Panc1 (cell line): ENCODE measurements at regions of chr14 and their contacts with region 1.

Region 1: DNA sequence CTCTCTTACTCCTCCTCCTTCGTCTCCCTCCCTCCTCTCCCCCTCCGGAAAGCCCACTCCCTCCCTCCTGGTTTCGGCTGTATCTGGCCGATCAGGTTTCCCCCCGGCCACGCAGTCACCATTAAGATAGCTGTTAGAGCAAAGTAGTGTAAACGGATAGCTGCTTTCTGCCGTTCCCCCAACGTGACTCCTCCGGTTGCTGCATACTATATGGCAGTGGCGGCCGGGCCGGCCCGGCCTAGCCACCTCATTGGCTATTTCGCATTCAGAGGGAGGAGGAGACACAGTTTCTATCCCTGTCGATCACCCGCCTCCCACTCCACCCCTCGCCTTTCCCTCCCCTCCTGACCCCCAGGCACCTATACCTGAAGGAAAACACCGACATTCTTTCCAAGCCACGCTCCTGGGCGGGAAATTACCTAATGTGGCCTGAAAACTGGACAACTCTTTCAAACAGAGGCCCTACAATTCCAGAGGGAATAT is at the start of gene SIX4:
- DNase-seq: peak; percentile 35
- ATAC-seq: peak; percentile 91
- H3K4me3 ChIP-seq: peak within 1 kb of the TSS; percentile 79 to 80
- H3K27ac ChIP-seq: peak within 1 kb of the TSS; percentile 89
- H3K4me1 ChIP-seq: peaks cover 11% of the 10 kb centered on the region
- H3K27me3 ChIP-seq: no peaks in the 10 kb centered on the region
- CTCF ChIP-seq: no peak
- total RNA-seq, gene SIX4: 17.3 TPM

Region 2: GRCh38 chr14:60420050-60420449 is 304.1 kb before region 1 on chr14:
- CTCF ChIA-PET with region 1: no interaction called
- POLR2A ChIA-PET with region 1: no interaction called
- in situ Hi-C with region 1: no loop called
- intact Hi-C with region 1: no loop called
- DNase-seq: no peak
- ATAC-seq: no peak
- H3K4me3 ChIP-seq: no peak overlapping the region
- H3K27ac ChIP-seq: no peak overlapping the region
- H3K4me1 ChIP-seq: no peaks in the 10 kb centered on the region
- H3K27me3 ChIP-seq: no peaks in the 10 kb centered on the region
- CTCF ChIP-seq: no peak

Region 3: GRCh38 chr14:60648934-60649874 is 75.0 kb before region 1 on chr14 and contains the start of gene SIX1:
- CTCF ChIA-PET with region 1: no interaction called
- POLR2A ChIA-PET with region 1: no interaction called
- in situ Hi-C with region 1: no loop called
- intact Hi-C with region 1: loop called (anchors 5 kb)
- DNase-seq: no peak
- ATAC-seq: peak; percentile 93
- H3K4me3 ChIP-seq: peak within 1 kb of the TSS; percentile 69 to 81
- H3K27ac ChIP-seq: peak within 1 kb of the TSS; percentile 90
- H3K4me1 ChIP-seq: peaks cover 29% of the 10 kb centered on the region
- H3K27me3 ChIP-seq: no peaks in the 10 kb centered on the region
- CTCF ChIP-seq: no peak
- total RNA-seq, gene SIX1: 7.4 TPM

Region 4: GRCh38 chr14:60738843-60739508 is 14.8 kb after region 1 on chr14:
- CTCF ChIA-PET with region 1: no interaction called
- POLR2A ChIA-PET with region 1: no interaction called
- in situ Hi-C with region 1: no loop called
- intact Hi-C with region 1: no loop called
- DNase-seq: no peak
- ATAC-seq: no peak
- H3K4me3 ChIP-seq: no peak overlapping the region
- H3K27ac ChIP-seq: no peak overlapping the region
- H3K4me1 ChIP-seq: no peaks in the 10 kb centered on the region; the same call in 1 of the 2 replicates
- H3K27me3 ChIP-seq: no peaks in the 10 kb centered on the region
- CTCF ChIP-seq: no peak